ENCODE measurements at regions of chr12 and their contacts with region 1.

Region 1: GRCh38 chr12:6867413-6868210 is at the start of gene TPI1:
- DNase-seq: peak; percentile 96
- H3K4me3 ChIP-seq: peak within 1 kb of the TSS; percentile 72 to 100 (median 96)
- H3K27ac ChIP-seq: peak within 1 kb of the TSS; percentile 95 to 100 (median 98)
- H3K4me1 ChIP-seq: peaks cover 0 to 48% (median 42%) of the 10 kb centered on the region in 4 donors
- H3K27me3 ChIP-seq: no peaks in the 10 kb centered on the region
- CTCF ChIP-seq: no peak
- EP300 ChIP-seq: no peak
- POLR2A ChIP-seq: peak; percentile 96 to 98
- total RNA-seq, gene TPI1: 194 to 345 (median 299) TPM

Region 2: GRCh38 chr12:6323340-6323994 is 544.1 kb before region 1 on chr12:
- intact Hi-C with region 1: no loop called
- DNase-seq: peak; percentile 89
- H3K4me3 ChIP-seq: peak overlapping the region in 2 of 4 donors; percentile 10 to 13
- H3K27ac ChIP-seq: peak overlapping the region; percentile 77 to 98 (median 92)
- H3K4me1 ChIP-seq: peaks cover 0 to 65% (median 56%) of the 10 kb centered on the region in 4 donors
- H3K27me3 ChIP-seq: no peaks in the 10 kb centered on the region
- CTCF ChIP-seq: peak; percentile 41 to 73 (median 48)
- EP300 ChIP-seq: no peak
- POLR2A ChIP-seq: no peak

Region 3: DNA sequence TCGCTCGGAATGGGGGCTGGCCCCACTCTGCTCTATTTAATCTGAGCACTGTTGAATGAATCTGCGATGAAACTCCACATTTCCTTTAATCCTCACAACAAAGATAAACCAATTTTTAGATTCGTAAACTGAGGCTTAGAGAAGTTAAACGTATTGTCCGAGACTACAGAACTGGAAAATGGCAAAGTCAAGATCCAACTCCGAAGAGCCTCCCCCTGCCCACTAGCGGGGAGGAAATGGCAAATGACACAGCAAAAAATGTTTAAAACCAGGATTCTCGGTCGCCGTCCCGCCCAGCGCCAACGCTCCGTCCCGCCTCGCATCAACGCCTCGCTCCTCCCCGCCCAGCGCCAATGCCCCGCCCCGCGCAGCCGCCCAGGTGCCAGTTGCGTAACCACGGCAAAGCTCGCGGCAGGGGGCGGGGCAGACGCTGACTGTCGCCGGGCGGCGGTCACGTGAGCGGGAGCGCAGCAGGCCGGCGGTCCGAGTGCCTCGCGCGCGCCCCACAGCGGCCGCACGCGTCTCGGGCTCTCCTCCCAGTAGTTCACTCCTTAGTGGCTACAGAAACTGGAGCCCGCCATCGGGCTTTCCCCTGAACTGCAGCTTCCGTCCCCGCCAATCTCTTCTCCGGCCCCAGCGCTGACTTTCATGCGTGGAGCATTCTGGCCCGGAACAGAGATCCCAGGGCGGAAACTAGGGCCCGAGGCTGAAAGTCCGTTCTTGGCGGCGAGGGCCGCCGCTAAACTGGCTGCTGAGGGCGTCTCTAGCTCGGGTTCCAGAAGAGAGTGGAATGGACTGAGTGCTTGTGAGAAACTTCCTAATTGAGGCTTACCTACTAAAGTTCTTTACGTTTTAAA is 23.4 kb after region 1 on chr12:
- intact Hi-C with region 1: loop called (anchors 1 kb)
- DNase-seq: peak; percentile 98
- H3K4me3 ChIP-seq: peak overlapping the region; percentile 42 to 55 (median 48)
- H3K27ac ChIP-seq: peak overlapping the region; percentile 88 to 94 (median 90)
- H3K4me1 ChIP-seq: peaks cover 0 to 13% (median 6%) of the 10 kb centered on the region in 4 donors
- H3K27me3 ChIP-seq: no peaks in the 10 kb centered on the region
- CTCF ChIP-seq: peak; percentile 66 to 85 (median 74)
- EP300 ChIP-seq: peak in 1 of 4 donors; percentile 58
- POLR2A ChIP-seq: peak; percentile 55 to 76

Region 4: DNA sequence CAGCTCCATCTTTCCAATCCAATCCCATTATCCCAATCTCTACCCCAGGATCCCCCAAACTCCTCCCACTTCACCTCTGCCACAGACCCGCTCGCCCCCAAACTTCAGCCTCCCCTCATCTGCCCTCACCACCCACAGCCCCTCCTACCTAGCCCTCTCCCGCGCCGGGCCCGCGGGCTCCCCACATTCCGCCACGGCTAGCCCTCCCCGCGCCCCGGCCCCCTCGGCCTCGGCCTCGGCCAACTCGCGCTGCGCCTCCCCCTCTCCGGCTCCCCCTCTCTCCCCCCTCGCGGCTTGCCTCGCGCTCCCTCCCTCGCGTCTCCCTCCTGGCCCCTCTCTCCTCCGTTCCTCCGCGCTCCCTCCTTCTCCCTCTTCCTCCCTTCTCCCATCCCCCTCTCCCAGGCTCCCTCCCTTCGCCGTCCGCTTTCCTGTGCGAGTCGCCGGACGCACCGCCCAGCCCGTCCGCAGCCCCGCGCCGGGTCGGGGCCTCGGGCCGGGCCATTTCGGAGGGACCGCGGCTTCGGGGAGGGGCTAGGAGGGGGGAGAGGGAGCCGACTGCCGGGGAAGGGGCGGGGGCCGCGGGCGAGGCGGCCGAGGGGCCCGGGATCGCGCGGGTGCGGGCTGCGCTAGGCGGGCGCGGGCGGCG is 59.9 kb after region 1 on chr12 and contains the start of gene ATN1:
- intact Hi-C with region 1: loop called (anchors 2 kb)
- DNase-seq: peak; percentile 97
- H3K4me3 ChIP-seq: peak within 1 kb of the TSS; percentile 84 to 99 (median 98)
- H3K27ac ChIP-seq: peak within 1 kb of the TSS; percentile 97 to 100 (median 99)
- H3K4me1 ChIP-seq: peaks cover 4 to 76% (median 67%) of the 10 kb centered on the region in 4 donors
- H3K27me3 ChIP-seq: no peaks in the 10 kb centered on the region
- CTCF ChIP-seq: no peak
- EP300 ChIP-seq: no peak
- POLR2A ChIP-seq: peak in 1 of 2 donors; percentile 39
- total RNA-seq, gene ATN1: 46.4 to 138 (median 60.3) TPM

Measured in sigmoid colon (tissue), 7 donors.